MCF 10A (cell line): ENCODE measurements at regions of chr1 and their contacts with region 1.

Region 1: DNA sequence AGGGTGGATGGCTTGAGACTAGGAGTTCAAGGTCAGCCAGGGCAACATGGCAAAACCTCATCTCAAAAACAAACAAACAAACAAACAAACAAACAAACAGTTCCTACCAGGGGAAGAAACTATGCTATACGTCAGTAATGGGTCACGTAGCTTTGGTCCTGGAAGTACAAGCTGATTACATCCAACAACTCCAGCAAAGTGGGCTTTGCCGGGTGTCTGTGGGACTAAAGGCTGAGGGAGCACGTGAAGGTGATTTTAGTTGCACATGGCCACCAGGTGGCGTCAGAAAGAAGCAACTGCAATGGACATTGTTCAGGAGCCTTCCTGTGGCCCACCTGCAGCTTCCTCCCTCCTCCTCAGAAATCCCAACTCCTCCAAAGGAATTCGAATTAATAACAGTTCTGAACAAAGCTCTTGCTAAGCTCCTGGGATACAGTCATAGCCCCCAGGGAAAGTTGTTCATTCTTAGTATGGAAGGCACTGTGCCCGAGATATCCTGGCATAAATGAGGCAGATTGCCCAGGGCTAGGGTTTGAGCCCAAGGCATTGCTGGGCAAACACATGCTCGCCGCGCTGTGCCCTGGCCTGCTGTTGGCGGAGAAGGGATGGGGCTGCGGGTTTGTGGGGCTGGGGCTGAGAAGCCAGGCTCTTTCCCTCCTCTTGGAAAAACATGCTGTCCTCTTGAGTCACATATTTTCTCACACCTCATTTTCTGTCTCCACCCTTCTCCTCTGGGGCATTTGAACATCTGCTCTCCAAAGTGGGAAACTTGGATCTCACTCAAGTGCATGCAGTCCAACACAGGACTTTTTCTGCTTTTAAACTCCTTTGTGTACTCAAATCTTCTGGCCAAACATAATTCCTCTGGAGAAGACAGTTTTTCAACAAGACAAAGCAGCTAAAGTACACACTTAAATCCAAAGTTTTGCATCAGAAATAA is 28.6 kb downstream of the AKNAD1 start:
- DNase-seq: peak; percentile 96
- H3K4me3 Mint-ChIP-seq: peak overlapping the region; percentile 59
- H3K27ac Mint-ChIP-seq: peak overlapping the region; percentile 94
- H3K4me1 Mint-ChIP-seq: peaks cover 47% of the 10 kb centered on the region
- H3K27me3 Mint-ChIP-seq: no peaks in the 10 kb centered on the region
- CTCF ChIP-seq: peak; percentile 75

Region 2: DNA sequence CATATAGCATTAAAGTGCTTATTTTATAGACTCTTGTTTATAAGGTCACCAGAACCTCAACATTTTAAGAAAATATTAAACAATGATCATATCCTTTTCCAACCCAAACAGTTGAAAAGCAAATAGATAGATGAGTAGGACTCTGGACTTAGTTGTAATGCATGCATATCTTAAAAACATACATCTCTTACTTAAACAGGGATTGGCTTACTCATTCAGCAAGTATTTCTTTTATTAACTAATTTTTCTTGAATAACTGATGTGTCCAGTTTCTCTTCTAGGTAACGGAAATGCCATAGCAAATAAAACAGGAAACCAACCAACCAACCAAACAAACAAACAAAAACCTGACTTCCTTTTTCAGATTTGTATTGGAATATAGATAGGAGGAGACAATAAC is 513.5 kb before region 1 on chr1:
- CTCF ChIA-PET with region 1: no interaction called
- POLR2A ChIA-PET with region 1: no interaction called
- intact Hi-C with region 1: no loop called
- DNase-seq: no peak
- H3K4me3 Mint-ChIP-seq: no peak overlapping the region
- H3K27ac Mint-ChIP-seq: no peak overlapping the region
- H3K4me1 Mint-ChIP-seq: no peaks in the 10 kb centered on the region
- H3K27me3 Mint-ChIP-seq: peaks cover 58% of the 10 kb centered on the region
- CTCF ChIP-seq: no peak

Region 3: DNA sequence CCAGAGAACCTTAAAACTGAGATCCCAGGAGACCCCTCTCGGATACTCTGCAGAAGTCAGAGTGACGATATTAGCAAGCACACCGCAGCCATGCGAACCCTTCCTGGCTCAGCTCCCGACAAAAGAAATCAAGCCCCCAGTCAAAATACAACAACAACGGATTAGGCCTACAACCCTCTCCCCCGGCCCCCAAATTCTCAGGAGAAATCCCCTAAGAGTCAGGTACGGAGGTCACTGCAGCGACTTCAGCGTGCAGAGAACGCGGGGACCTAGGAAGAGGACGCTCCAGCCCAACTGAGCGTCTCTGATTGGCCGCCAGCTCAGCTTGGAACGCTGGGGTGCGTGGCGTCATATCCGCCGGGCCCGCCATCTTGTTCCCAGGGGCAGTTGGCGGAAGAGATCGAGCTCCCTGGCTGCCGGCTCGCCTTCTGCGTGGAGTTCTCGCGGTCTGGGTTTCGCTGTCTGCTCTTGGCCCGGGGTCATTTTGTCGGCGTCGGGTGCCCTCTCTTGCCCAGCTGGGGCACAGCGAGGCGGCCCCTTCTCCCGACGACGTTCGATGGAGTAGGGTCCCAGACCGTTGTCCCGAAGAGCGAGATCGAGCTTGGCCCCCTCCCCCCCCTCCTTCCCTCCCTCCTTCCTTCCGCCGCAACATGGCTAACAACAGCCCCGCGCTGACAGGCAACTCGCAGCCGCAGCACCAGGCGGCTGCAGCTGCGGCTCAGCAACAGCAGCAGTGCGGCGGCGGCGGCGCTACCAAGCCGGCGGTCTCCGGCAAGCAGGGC is 136.2 kb before region 1 on chr1 and contains the start of gene PRPF38B:
- CTCF ChIA-PET with region 1: interaction called, 4 read pairs
- POLR2A ChIA-PET with region 1: interaction called, 21 read pairs
- intact Hi-C with region 1: loop called (anchors 1 kb)
- DNase-seq: peak; percentile 93
- H3K4me3 Mint-ChIP-seq: peak within 1 kb of the TSS; percentile 100
- H3K27ac Mint-ChIP-seq: peak within 1 kb of the TSS; percentile 99
- H3K4me1 Mint-ChIP-seq: peaks cover 26% of the 10 kb centered on the region
- H3K27me3 Mint-ChIP-seq: no peaks in the 10 kb centered on the region
- CTCF ChIP-seq: no peak
- total RNA-seq, gene PRPF38B: 65.1 and 65.3 TPM in 2 replicates

Region 4: GRCh38 chr1:108816049-108816893 is 12.0 kb before region 1 on chr1:
- CTCF ChIA-PET with region 1: interaction called, 71 read pairs
- POLR2A ChIA-PET with region 1: interaction called, 121 read pairs
- intact Hi-C with region 1: no loop called
- DNase-seq: peak; percentile 69
- H3K4me3 Mint-ChIP-seq: peak overlapping the region; percentile 68
- H3K27ac Mint-ChIP-seq: peak overlapping the region; percentile 100
- H3K4me1 Mint-ChIP-seq: peaks cover 27% of the 10 kb centered on the region
- H3K27me3 Mint-ChIP-seq: no peaks in the 10 kb centered on the region
- CTCF ChIP-seq: no peak

Region 5: DNA sequence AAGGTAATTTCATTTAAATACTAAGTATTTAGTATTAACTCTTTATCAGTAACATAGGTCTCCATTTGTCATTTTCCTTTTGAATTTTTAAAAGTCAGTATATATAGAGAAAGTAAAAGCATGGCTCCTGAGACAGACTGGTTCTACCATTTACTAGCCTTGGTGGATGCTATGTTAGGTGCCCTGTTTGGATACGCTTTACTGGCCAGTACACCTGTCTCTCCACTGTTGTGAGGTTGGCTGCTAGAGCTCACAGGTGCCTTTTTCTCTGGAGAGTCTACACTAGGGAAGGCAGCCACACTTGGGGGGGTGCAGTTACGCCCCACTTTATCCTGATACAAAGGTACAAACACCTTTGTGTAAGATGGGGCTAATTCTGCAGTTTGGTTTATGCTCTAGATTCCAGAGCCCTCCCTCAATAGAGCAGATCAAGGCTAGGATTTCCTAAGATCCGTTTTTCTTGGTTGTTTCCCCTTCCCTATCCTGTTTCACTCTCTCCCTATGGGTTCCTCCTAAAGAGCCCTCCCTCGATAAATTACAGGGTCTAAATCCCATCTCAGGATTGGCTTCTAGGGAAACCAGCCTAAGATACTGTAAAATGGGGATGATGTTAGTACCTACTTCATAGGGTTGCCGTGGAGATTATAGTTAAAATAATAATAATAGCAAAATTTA is 42.9 kb after region 1 on chr1:
- CTCF ChIA-PET with region 1: interaction called, 65 read pairs
- POLR2A ChIA-PET with region 1: interaction called, 276 read pairs
- intact Hi-C with region 1: no loop called
- DNase-seq: no peak
- H3K4me3 Mint-ChIP-seq: no peak overlapping the region
- H3K27ac Mint-ChIP-seq: no peak overlapping the region
- H3K4me1 Mint-ChIP-seq: no peaks in the 10 kb centered on the region
- H3K27me3 Mint-ChIP-seq: no peaks in the 10 kb centered on the region
- CTCF ChIP-seq: no peak

Region 6: DNA sequence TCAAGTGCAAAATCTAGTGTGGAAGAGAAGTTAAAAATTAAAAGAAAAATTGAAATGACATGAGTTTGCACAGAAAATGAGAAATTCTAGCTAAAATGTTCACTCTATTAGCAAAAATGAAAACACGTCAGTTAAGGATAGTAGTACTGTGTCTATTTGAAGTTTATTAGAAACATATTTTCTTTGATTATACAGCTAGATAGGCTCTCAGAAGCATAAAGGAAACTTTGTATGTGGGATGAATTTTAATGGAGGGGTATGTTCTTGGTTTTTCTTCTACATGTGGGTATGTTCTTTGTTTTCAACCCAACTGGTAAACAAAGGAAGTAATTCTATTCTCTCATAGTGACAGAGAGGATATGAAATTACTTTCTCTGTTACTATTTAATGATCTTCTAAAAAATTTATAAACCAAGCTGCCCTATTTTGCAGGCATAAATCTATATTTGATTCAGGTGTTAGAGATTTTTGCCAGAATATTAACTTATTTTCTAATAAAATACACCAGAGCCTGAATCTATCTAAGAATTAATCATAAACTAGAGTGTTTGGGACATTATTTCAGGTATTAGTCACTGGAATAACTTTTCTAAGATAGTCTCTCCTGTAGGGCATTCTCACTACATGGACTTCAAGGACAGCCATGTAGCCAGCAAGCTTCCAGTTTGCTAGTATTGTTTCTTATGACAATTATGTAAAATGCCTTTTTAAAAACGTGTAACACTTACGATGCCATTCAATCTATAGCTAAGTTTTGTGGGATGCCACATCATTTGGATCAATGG is 64.3 kb after region 1 on chr1:
- CTCF ChIA-PET with region 1: interaction called, 255 read pairs
- POLR2A ChIA-PET with region 1: interaction called, 185 read pairs
- intact Hi-C with region 1: no loop called
- DNase-seq: no peak
- H3K4me3 Mint-ChIP-seq: no peak overlapping the region
- H3K27ac Mint-ChIP-seq: peak overlapping the region; percentile 66
- H3K4me1 Mint-ChIP-seq: peaks cover 52% of the 10 kb centered on the region
- H3K27me3 Mint-ChIP-seq: no peaks in the 10 kb centered on the region
- CTCF ChIP-seq: no peak

Region 7: GRCh38 chr1:108963052-108963686 is 134.9 kb after region 1 on chr1 and contains the start of gene CLCC1:
- CTCF ChIA-PET with region 1: interaction called, 3 read pairs
- POLR2A ChIA-PET with region 1: interaction called, 12 read pairs
- intact Hi-C with region 1: no loop called
- DNase-seq: peak; percentile 94
- H3K4me3 Mint-ChIP-seq: peak within 1 kb of the TSS; percentile 86
- H3K27ac Mint-ChIP-seq: peak within 1 kb of the TSS; percentile 83
- H3K4me1 Mint-ChIP-seq: peaks cover 18% of the 10 kb centered on the region
- H3K27me3 Mint-ChIP-seq: no peaks in the 10 kb centered on the region
- CTCF ChIP-seq: no peak
- total RNA-seq, gene CLCC1: 36.6 and 46.3 TPM in 2 replicates